SK-N-SH (cell line): ENCODE measurements at regions of chr1 and their contacts with region 1.

Region 1: GRCh38 chr1:205998457-205999241 is 4.5 kb downstream of the RAB7B start:
- DNase-seq: no peak
- H3K4me3 ChIP-seq: no peak overlapping the region
- H3K27ac ChIP-seq: no peak overlapping the region
- H3K4me1 ChIP-seq: peaks cover 0 to 17% of the 10 kb centered on the region in 2 experiments; a peak in 2 of 4 replicates
- H3K27me3 ChIP-seq: no peaks in the 10 kb centered on the region; the same call in 1 of the 2 replicates
- CTCF ChIP-seq: no peak
- EP300 ChIP-seq: no peak
- RAD21 ChIP-seq: no peak

Region 2: DNA sequence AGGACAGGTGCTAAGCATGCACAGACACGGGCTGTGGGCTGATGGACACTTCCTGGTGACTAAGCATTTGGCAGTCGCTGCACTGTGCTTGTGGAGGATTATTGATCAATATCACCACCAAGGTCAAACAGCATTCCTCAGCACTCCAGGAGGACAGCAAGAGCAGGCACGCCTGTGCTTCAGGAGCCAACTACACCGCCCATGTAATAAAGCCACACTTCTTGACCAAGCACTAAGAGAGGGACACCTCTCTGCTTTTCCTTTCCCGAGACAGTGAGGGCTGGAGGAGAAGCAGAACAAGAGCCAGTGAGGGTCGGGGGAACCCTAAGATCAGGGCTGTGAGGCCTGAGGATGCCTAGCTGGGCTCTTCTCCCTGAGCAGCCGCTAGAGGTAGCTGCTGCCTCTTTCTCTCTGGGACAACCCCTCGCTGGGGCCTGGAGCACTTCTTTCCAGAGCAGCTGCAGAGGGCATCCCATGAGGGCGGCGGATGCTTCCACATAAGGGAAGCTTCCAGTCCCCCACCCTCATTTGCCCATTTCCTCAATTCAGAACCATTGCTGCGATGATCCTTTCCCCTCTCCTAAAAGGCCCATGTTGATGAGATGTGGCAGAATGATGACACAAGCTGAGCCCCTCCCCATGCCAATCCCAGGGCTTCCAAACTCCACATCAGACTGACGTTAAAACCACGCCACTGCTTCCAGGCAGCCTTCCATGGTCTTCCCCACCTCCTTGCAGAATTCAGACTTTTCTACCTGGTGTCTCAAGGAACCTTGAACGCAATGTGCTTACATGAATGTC is 14.5 kb before region 1 on chr1:
- CTCF ChIA-PET with region 1: interaction called, 13 read pairs
- POLR2A ChIA-PET with region 1: no interaction called
- DNase-seq: peak; percentile 74
- H3K4me3 ChIP-seq: no peak overlapping the region; a peak in 1 of 4 replicates
- H3K27ac ChIP-seq: no peak overlapping the region
- H3K4me1 ChIP-seq: peaks cover 0 to 10% of the 10 kb centered on the region in 2 experiments; a peak in 1 of 4 replicates
- H3K27me3 ChIP-seq: no peaks in the 10 kb centered on the region
- CTCF ChIP-seq: peak; percentile 78
- EP300 ChIP-seq: no peak
- RAD21 ChIP-seq: peak; percentile 78

Region 3: DNA sequence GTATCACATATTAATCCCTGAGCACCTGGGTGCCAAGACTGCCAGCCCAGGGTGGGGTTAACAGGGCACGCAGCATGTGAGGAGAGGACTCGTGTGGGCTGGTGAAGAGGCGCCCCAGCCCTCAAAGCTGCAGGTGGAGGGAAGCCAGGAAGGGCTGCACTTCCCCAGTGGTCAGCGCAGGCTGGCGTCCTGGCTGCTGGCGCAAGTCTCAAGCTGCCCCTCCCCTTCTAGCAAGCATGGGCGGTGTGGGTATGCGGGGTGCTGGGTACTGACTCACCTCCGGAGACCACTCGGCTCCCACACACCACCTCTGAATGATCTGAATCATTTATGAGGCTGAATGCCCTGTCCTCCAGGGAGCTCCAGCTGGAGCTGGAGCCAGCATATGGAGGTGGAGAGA is 569.6 kb after region 1 on chr1:
- CTCF ChIA-PET with region 1: no interaction called
- POLR2A ChIA-PET with region 1: no interaction called
- DNase-seq: no peak
- H3K4me3 ChIP-seq: no peak overlapping the region
- H3K27ac ChIP-seq: no peak overlapping the region
- H3K4me1 ChIP-seq: no peaks in the 10 kb centered on the region
- H3K27me3 ChIP-seq: no peaks in the 10 kb centered on the region
- CTCF ChIP-seq: no peak
- EP300 ChIP-seq: no peak
- RAD21 ChIP-seq: no peak